Right cardiac atrium (tissue), 5 donors: ENCODE measurements at regions of chr13 and their contacts with region 1.

Region 1: DNA sequence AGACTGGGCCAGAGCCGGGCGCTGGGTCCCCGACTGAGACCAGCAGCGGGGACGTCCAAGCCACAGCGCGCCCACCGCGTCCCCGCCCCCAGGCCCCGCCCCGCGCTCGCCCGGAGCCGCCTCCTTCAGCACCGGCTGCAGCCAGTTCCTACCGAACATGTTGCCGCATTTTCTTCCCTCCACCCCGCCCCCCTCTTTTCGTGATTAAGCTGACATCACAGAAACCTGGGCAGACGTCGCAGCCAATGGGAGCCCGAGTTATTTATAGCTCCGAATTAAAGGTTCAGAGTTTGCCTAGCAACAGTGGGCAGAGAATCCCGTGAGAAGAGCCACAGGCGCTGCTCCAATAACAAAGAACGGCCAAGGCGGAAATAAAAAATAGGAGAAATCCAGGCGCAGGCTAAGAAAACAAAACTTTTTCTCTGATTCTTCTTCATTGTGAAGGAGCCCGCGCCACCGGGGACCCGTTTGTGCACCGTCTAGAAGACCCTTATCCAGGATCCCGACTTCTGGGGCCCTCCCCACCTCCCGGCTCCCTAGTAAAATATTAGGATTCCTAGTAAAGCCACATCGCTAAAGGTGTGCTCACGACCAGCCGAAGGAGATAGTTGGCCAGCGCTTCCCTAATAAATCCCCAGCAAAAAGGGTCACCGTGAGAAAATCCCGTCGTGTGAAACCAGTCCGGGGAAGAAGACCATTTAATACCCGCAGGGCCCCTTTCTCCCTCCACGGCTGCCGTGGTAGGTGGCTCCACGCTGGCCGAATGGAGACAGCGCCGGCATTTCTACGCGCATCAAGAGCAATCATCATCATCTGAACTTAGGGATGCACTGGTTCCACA is 61.7 kb downstream of the SERP2 start:
- DNase-seq: peak; percentile 95 to 97 (median 96)
- ATAC-seq: peak; percentile 84 to 87
- H3K4me3 ChIP-seq: peak overlapping the region; percentile 85
- H3K27ac ChIP-seq: peak overlapping the region; percentile 93
- H3K4me1 ChIP-seq: peaks cover 2% of the 10 kb centered on the region
- H3K27me3 ChIP-seq: no peaks in the 10 kb centered on the region

Region 2: GRCh38 chr13:43905435-43906031 is 529.8 kb before region 1 on chr13:
- intact Hi-C with region 1: loop called (anchors 2 to 10 kb)
- DNase-seq: no peak
- ATAC-seq: peak; percentile 64 to 69
- H3K4me3 ChIP-seq: no peak overlapping the region
- H3K27ac ChIP-seq: no peak overlapping the region
- H3K4me1 ChIP-seq: no peaks in the 10 kb centered on the region
- H3K27me3 ChIP-seq: no peaks in the 10 kb centered on the region

Region 3: GRCh38 chr13:44141725-44142539 is 293.4 kb before region 1 on chr13:
- intact Hi-C with region 1: loop called in 2 of 4 experiments (anchors 10 kb)
- DNase-seq: peak; percentile 98 to 100 (median 99)
- ATAC-seq: peak; percentile 100
- H3K4me3 ChIP-seq: peak overlapping the region; percentile 77
- H3K27ac ChIP-seq: peak overlapping the region; percentile 99
- H3K4me1 ChIP-seq: peaks cover 5% of the 10 kb centered on the region
- H3K27me3 ChIP-seq: no peaks in the 10 kb centered on the region

Region 4: GRCh38 chr13:44237276-44237767 is 198.0 kb before region 1 on chr13:
- intact Hi-C with region 1: loop called in 2 of 4 experiments (anchors 5 to 10 kb)
- DNase-seq: peak; percentile 80 to 84 (median 81)
- ATAC-seq: peak; percentile 99
- H3K4me3 ChIP-seq: no peak overlapping the region
- H3K27ac ChIP-seq: peak overlapping the region; percentile 97
- H3K4me1 ChIP-seq: peaks cover 17% of the 10 kb centered on the region
- H3K27me3 ChIP-seq: no peaks in the 10 kb centered on the region

Region 5: DNA sequence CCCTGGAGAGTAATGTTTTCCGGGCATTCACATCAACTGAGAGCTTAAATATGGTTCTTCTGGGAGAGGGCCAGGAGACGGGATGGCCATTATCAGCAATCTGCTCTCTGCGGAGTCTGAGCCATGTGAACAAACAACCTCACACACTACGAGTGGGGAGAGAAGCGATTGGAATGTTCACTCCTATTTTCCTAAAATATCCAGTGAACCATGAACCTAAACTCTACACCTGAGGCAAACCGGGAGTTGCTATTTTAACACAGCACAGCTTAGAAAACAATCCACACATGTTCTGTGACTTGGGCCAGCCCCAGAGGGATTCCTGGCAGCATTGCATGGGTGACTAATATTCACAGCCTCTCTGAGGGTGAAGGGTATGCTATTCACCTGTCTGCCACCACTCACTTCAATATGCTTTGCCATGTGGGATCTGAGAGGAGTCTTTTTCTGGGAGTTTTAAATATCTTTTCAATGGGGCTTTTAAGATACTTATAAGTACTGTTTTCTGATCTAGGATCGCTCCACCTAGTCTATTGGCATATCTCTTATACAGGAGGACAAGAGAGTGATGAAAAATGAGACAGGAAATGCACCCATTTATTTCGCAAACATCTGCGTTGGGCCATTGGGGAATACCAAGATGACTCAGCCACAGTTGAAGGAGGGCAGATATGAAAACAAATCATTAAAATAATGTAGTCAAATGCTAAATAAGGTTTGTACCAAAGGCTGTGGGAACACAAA is 134.3 kb before region 1 on chr13:
- intact Hi-C with region 1: loop called in 1 of 4 experiments (anchors 10 kb)
- DNase-seq: peak; percentile 28 to 54 (median 53)
- ATAC-seq: peak; percentile 76 to 84
- H3K4me3 ChIP-seq: no peak overlapping the region
- H3K27ac ChIP-seq: peak overlapping the region; percentile 44
- H3K4me1 ChIP-seq: peaks cover 9% of the 10 kb centered on the region
- H3K27me3 ChIP-seq: no peaks in the 10 kb centered on the region

Region 6: GRCh38 chr13:44388427-44389059 is 46.8 kb before region 1 on chr13:
- intact Hi-C with region 1: loop called in 2 of 4 experiments (anchors 10 kb)
- DNase-seq: peak; percentile 33 to 66 (median 61)
- ATAC-seq: peak; percentile 52 to 73
- H3K4me3 ChIP-seq: no peak overlapping the region
- H3K27ac ChIP-seq: peak overlapping the region; percentile 61
- H3K4me1 ChIP-seq: no peaks in the 10 kb centered on the region
- H3K27me3 ChIP-seq: no peaks in the 10 kb centered on the region

Region 7: DNA sequence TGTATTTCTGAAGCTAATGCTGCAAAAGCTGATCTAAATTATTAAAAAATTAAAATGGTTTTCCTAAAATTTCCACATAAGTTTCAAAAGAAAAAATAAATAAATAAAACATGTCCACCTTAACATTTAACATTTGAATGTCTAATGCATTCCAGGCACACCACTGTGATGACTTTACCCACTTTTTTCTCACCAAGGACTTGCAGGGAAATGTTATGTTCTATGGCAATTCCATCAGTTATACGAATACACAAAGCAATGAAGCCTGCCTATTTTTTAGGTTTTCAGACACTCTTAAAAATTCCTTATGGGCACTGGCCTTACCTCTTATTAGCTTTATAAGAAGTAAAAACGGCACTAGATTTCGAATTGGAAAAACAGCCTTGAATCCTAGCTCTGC is 130.5 kb after region 1 on chr13:
- intact Hi-C with region 1: no loop called
- DNase-seq: no peak
- ATAC-seq: no peak
- H3K4me3 ChIP-seq: no peak overlapping the region
- H3K27ac ChIP-seq: no peak overlapping the region
- H3K4me1 ChIP-seq: peaks cover 2% of the 10 kb centered on the region
- H3K27me3 ChIP-seq: no peaks in the 10 kb centered on the region